GM12878 (cell line): ENCODE measurements at regions of chr4 and their contacts with region 1.

Region 1: GRCh38 chr4:48439988-48440387 is 43.2 kb upstream of the SLC10A4 start:
- DNase-seq: no peak
- ATAC-seq: no peak
- H3K4me3 ChIP-seq: no peak overlapping the region
- H3K27ac ChIP-seq: no peak overlapping the region
- H3K4me1 ChIP-seq: no peaks in the 10 kb centered on the region
- H3K27me3 ChIP-seq: no peaks in the 10 kb centered on the region
- CTCF ChIP-seq: no peak
- EP300 ChIP-seq: no peak
- POLR2A ChIP-seq: no peak
- RAD21 ChIP-seq: no peak

Region 2: GRCh38 chr4:48375651-48376293 is 64.2 kb before region 1 on chr4:
- CTCF ChIA-PET with region 1: no interaction called
- POLR2A ChIA-PET with region 1: no interaction called
- RAD21 ChIA-PET with region 1: no interaction called
- SMC1A ChIA-PET with region 1: no interaction called
- in situ Hi-C with region 1: loop called (anchors 10 kb)
- intact Hi-C with region 1: no loop called
- DNase-seq: no peak
- ATAC-seq: no peak
- H3K4me3 ChIP-seq: no peak overlapping the region
- H3K27ac ChIP-seq: no peak overlapping the region
- H3K4me1 ChIP-seq: no peaks in the 10 kb centered on the region
- H3K27me3 ChIP-seq: no peaks in the 10 kb centered on the region
- CTCF ChIP-seq: no peak
- EP300 ChIP-seq: no peak
- POLR2A ChIP-seq: no peak
- RAD21 ChIP-seq: no peak